Aorta (tissue), 5 donors: ENCODE measurements at regions of chr19 and their contacts with region 1.

Region 1: DNA sequence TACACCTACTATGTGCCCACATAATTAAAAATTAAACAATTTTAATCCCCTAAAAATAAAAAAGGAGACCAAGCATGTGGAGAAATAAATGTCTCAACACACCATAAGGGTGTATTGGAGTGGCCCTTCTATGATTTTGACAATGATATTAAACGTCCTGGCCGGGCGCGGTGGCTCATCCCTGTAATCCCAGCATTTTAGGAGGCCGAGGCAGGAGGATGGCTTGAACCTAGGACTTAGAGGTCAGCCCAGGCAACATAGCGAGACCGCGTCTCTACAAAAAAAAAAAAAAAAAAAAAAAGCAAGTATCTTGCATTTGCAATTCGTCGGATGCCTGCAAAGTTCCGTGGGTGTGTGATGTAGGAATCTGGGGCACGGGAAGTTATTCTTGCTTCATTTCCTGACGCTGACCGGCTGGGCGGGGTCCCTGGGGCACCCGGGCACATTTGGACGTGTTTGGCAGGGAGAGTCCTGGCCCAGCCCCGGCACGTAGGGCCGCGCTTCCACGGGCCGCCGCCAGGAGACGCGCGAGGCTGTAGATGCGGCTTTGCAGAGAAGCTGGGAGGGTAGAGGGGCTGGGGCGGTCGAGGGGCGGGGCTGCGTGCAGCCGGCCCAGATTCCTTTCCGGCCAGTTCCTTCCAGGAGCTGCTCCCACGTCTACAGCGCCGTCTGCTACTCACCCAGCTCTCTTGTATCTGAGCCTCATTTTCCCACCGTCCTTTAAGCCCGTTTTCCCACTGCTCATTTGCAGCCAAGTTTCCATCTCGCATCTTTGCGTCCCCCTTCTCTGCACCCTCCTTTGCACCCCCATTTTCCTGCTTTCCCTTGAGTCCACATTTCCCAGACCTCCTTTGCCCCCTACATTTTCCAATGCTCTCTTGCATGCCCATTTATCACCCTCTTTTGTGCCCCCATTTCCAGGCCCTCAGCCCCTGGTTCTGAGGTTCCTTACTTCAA is 2.2 kb upstream of the TSPAN16 start:
- DNase-seq: peak; percentile 98 to 99
- ATAC-seq: peak; percentile 98
- H3K4me3 ChIP-seq: no peak overlapping the region
- H3K27ac ChIP-seq: peak overlapping the region in 1 of 2 donors; percentile 52
- H3K4me1 ChIP-seq: no peaks in the 10 kb centered on the region
- H3K27me3 ChIP-seq: no peaks in the 10 kb centered on the region

Region 2: DNA sequence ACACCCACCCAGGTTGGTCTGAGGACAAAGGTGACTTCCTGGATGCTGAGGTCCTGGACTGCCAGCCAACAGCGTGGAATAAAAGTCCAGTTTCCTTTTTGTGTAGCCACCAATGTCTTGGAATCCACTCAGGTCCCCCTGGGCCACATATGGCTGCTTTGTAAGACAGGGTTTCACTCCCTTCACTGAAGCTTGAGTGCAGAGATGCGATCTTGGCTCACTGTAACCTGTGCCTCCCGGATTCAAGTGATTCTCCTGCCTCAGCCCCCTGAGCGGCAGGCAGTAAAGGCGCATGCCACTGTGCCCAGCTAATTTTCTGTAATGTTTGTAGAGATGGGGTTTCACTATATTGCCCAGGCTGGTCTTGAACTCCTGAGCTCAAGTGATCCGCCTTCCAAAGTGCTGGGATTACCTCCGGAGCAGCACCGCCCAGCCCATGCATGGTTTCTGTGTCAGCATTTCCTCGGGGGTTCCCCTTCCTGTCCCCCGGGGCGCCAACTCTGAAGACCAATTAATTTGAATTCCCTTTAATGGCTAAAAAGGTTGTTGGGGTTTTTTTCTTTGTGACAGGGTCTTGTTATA is 113.9 kb before region 1 on chr19:
- intact Hi-C with region 1: no loop called
- DNase-seq: peak in 1 of 2 donors; percentile 81
- ATAC-seq: no peak
- H3K4me3 ChIP-seq: no peak overlapping the region
- H3K27ac ChIP-seq: peak overlapping the region in 1 of 2 donors; percentile 4
- H3K4me1 ChIP-seq: peaks cover 0 to 2% of the 10 kb centered on the region in 2 donors
- H3K27me3 ChIP-seq: no peaks in the 10 kb centered on the region

Region 3: DNA sequence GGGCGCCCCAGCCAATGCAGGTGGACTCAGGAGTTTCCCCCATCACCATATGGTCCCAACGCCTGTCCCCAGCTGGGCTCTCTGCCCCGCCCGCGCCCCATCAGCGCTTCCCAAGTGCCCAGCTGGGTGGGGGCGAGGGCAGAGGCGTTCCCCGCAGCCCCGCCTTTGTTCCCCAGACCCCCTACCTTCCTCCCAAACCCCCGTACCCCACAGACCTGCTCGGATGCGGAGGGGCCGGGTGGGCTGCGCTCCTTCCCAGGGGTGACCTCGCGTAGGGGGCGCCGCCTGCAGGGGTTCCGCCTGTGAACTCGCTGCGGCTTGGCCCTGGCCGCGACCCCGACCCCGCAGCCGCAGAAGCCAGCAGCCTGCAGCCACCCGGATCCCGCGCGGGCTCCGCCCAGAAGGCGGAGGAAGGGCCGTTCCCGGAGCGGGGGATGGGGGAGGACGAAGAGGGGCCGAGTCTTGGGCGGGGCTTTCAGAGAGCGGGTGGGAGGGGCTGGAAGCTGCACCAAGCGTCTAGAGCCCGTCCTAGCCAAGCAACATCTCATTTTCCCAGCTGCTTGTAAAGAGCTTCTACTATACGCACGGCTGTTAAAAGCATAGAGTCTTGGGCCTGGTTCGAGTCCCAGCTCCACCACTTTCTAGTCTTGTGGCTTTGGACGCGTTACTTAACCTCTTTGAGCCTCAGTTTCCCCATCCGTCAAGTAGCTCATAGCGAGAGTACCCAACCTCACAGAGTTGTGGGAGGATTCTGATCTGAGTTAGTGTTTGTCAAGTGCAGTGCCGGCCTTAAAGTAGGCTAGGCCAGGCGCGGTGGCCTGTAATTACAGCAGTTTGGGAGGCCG is 45.8 kb after region 1 on chr19 and contains the start of gene RAB3D:
- intact Hi-C with region 1: loop called in 1 of 2 experiments (anchors 5 kb)
- DNase-seq: peak; percentile 96 to 97
- ATAC-seq: peak; percentile 93
- H3K4me3 ChIP-seq: peak within 1 kb of the TSS; percentile 58 to 72
- H3K27ac ChIP-seq: peak within 1 kb of the TSS in 1 of 2 donors; percentile 7
- H3K4me1 ChIP-seq: no peaks in the 10 kb centered on the region
- H3K27me3 ChIP-seq: no peaks in the 10 kb centered on the region
- total RNA-seq, gene RAB3D: 26.7 to 32.7 TPM

Region 4: DNA sequence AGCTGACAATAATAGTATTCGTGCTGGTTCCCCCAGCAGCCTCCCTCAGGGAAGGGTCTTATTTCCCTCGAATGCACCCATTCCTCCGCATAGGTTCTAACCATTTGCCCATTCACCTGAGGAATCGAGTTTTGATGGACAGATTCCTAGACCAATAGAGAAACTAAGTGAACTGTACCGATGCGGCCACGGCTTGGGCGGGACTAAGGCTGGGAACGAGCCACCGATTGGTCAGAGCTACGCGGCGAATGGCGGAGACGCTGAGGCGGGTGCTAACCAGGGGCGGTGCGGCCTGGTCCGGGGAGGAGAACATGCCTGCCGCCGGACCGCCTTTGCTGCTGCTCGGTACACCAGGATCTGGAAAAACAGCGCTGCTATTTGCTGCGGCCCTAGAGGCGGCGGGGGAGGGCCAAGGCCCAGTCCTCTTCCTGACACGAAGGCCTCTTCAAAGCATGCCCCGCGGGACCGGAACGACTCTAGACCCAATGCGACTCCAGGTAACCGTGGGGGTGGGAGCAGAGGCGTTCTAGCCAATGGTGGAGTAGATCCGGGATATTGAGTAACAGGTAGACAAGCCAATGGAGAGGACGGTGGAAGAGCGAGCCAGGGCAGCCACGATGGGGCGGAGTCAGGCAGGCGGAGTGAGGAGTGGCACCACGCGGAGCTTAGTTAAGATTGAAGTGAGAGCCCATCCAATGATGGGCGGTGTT is 80.9 kb after region 1 on chr19 and contains the start of gene SWSAP1:
- intact Hi-C with region 1: loop called in 1 of 2 experiments (anchors 5 kb)
- DNase-seq: peak; percentile 99
- ATAC-seq: peak; percentile 98
- H3K4me3 ChIP-seq: peak within 1 kb of the TSS in 1 of 2 donors; percentile 55
- H3K27ac ChIP-seq: peak within 1 kb of the TSS; percentile 72 to 88
- H3K4me1 ChIP-seq: peaks cover 2 to 4% of the 10 kb centered on the region in 2 donors
- H3K27me3 ChIP-seq: no peaks in the 10 kb centered on the region
- total RNA-seq, gene SWSAP1: 1.5 to 1.7 TPM

Region 5: GRCh38 chr19:11435058-11435832 is 141.5 kb after region 1 on chr19 and contains the starts of genes ODAD3 and PRKCSH:
- intact Hi-C with region 1: loop called (anchors 5 kb)
- DNase-seq: peak; percentile 99 to 100
- ATAC-seq: peak; percentile 99
- H3K4me3 ChIP-seq: peak within 1 kb of the TSS; percentile 49 to 67
- H3K27ac ChIP-seq: peak within 1 kb of the TSS in 1 of 2 donors; percentile 66
- H3K4me1 ChIP-seq: no peaks in the 10 kb centered on the region
- H3K27me3 ChIP-seq: no peaks in the 10 kb centered on the region
- total RNA-seq, gene ODAD3: 0.49 to 1.8 TPM
- total RNA-seq, gene PRKCSH: 168 to 207 TPM

Region 6: GRCh38 chr19:11482384-11483050 is 188.8 kb after region 1 on chr19:
- intact Hi-C with region 1: loop called in 1 of 2 experiments (anchors 5 kb)
- DNase-seq: peak; percentile 89 to 95
- ATAC-seq: peak; percentile 93
- H3K4me3 ChIP-seq: no peak overlapping the region
- H3K27ac ChIP-seq: no peak overlapping the region
- H3K4me1 ChIP-seq: no peaks in the 10 kb centered on the region
- H3K27me3 ChIP-seq: no peaks in the 10 kb centered on the region

Region 7: GRCh38 chr19:11597202-11598102 is 303.7 kb after region 1 on chr19 and contains the start of gene ZNF627:
- intact Hi-C with region 1: loop called in 1 of 2 experiments (anchors 10 kb)
- DNase-seq: peak; percentile 99 to 100
- ATAC-seq: peak; percentile 100
- H3K4me3 ChIP-seq: peak within 1 kb of the TSS; percentile 95 to 96
- H3K27ac ChIP-seq: peak within 1 kb of the TSS in 1 of 2 donors; percentile 49
- H3K4me1 ChIP-seq: no peaks in the 10 kb centered on the region
- H3K27me3 ChIP-seq: no peaks in the 10 kb centered on the region
- total RNA-seq, gene ZNF627: 7.1 to 12.2 TPM